Natural killer cell (primary cell): ENCODE measurements at regions of chr19 and their contacts with region 1.

Region 1: DNA sequence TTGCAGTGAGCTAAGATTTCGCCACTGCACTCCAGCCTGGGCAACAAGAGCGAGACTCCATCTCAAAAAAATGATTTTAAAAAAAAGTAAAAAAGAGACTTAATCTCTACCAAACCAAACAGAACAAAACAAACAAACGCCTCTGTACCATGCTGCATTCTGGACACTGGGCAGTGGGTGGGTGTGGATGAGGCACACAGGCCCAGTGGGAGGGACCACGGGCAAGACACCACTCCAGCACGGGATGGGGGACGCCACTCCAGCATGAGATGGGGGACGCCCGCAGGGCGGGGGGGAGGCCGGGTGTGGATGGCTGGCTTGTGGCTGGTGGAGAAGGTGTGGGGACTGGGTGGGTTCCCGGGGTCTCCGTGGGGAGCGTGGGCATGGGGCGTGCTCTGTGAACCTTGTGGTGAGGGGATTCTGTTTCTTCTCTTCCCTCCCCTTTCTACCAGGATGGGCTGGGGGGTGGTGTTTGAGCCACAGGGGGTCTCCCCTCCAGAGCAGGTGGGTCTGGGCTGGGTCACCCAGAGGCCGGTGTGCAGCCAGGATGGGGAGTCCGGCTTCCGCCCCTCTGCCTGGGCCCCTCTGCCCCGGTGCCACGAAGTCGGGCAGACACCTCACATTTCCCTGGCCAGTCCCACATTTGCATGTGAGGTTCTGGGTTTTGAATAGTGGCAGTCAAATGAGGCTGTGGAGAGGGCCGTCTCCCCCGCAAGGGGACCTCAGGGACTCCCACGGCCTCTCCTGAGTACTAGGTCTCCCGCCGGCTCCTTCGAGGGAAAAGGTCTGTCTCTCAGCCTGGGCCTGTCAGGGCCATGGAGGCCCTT is 23.9 kb upstream of the MATK start:
- DNase-seq: no peak
- ATAC-seq: no peak
- H3K4me3 ChIP-seq: no peak overlapping the region
- H3K4me3 Mint-ChIP-seq: no peak overlapping the region
- H3K27ac ChIP-seq: peak overlapping the region; percentile 62
- H3K27ac Mint-ChIP-seq: peak overlapping the region; percentile 65 to 99
- H3K4me1 ChIP-seq: peaks cover 100% of the 10 kb centered on the region
- H3K4me1 Mint-ChIP-seq: peaks cover 52 to 63% of the 10 kb centered on the region in 2 donors
- H3K27me3 ChIP-seq: no peaks in the 10 kb centered on the region
- H3K27me3 Mint-ChIP-seq: no peaks in the 10 kb centered on the region
- CTCF ChIP-seq: no peak

Region 2: GRCh38 chr19:3721131-3721886 is 88.8 kb before region 1 on chr19:
- intact Hi-C with region 1: no loop called
- DNase-seq: peak; percentile 83 to 90
- ATAC-seq: peak; percentile 95 to 98 (median 98)
- H3K4me3 ChIP-seq: peak overlapping the region; percentile 32
- H3K4me3 Mint-ChIP-seq: peak overlapping the region; percentile 64
- H3K27ac ChIP-seq: no peak overlapping the region
- H3K27ac Mint-ChIP-seq: peak overlapping the region in 1 of 2 donors; percentile 36
- H3K4me1 ChIP-seq: peaks cover 19% of the 10 kb centered on the region
- H3K4me1 Mint-ChIP-seq: peaks cover 0 to 16% of the 10 kb centered on the region in 2 donors
- H3K27me3 ChIP-seq: peaks cover 29% of the 10 kb centered on the region
- H3K27me3 Mint-ChIP-seq: peaks cover 0 to 23% of the 10 kb centered on the region in 2 donors
- CTCF ChIP-seq: no peak

Region 3: GRCh38 chr19:3788996-3789778 is 20.9 kb before region 1 on chr19:
- intact Hi-C with region 1: loop called (anchors 1 kb)
- DNase-seq: peak; percentile 70 to 77
- ATAC-seq: peak; percentile 67 to 82 (median 77)
- H3K4me3 ChIP-seq: peak overlapping the region; percentile 15
- H3K4me3 Mint-ChIP-seq: peak overlapping the region; percentile 88
- H3K27ac ChIP-seq: peak overlapping the region; percentile 84
- H3K27ac Mint-ChIP-seq: peak overlapping the region; percentile 92 to 96
- H3K4me1 ChIP-seq: peaks cover 80% of the 10 kb centered on the region
- H3K4me1 Mint-ChIP-seq: peaks cover 41 to 57% of the 10 kb centered on the region in 2 donors
- H3K27me3 ChIP-seq: no peaks in the 10 kb centered on the region
- H3K27me3 Mint-ChIP-seq: no peaks in the 10 kb centered on the region
- CTCF ChIP-seq: no peak